Activated CD4-positive, alpha-beta T cell treated with anti-CD3 and anti-CD28 coated beads for 36 hours (primary cell): ENCODE measurements at regions of chr16 and their contacts with region 1.

Region 1: GRCh38 chr16:57413301-57413730 is 8.7 kb downstream of the CCL17 start:
- DNase-seq: no peak
- ATAC-seq: no peak
- H3K4me3 Mint-ChIP-seq: no peak overlapping the region
- H3K27ac Mint-ChIP-seq: no peak overlapping the region
- H3K4me1 Mint-ChIP-seq: peaks cover 10% of the 10 kb centered on the region
- H3K27me3 Mint-ChIP-seq: no peaks in the 10 kb centered on the region

Region 2: GRCh38 chr16:57377080-57377841 is 36.1 kb before region 1 on chr16:
- CTCF ChIA-PET with region 1: interaction called, 5 read pairs
- POLR2A ChIA-PET with region 1: no interaction called
- intact Hi-C with region 1: loop called in 1 of 2 experiments (anchors 2 kb)
- DNase-seq: peak; percentile 70
- ATAC-seq: peak; percentile 90
- H3K4me3 Mint-ChIP-seq: no peak overlapping the region
- H3K27ac Mint-ChIP-seq: no peak overlapping the region
- H3K4me1 Mint-ChIP-seq: peaks cover 16% of the 10 kb centered on the region
- H3K27me3 Mint-ChIP-seq: peaks cover 2% of the 10 kb centered on the region

Region 3: DNA sequence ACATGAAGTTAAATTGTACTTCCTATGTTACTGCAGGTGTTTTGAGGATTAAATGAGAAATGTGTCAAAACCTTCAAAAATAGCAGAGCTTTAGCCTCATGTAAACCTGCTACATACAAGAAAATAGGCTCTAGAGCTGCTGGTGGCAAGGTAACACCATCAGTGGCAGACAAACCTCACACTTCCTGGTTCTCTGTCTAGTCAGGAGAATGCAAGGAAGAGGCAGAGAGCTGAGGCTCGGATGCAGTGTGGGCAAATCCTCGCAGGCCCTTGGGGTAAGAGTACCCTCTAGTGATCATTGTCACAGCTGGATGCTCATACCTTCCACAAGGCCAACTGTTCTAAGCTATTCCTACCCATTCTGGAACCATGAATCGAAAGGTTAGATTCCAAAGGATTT is 19.7 kb after region 1 on chr16:
- CTCF ChIA-PET with region 1: interaction called, 14 read pairs
- POLR2A ChIA-PET with region 1: no interaction called
- intact Hi-C with region 1: no loop called
- DNase-seq: no peak
- ATAC-seq: no peak
- H3K4me3 Mint-ChIP-seq: no peak overlapping the region
- H3K27ac Mint-ChIP-seq: peak overlapping the region; percentile 49
- H3K4me1 Mint-ChIP-seq: peaks cover 28% of the 10 kb centered on the region
- H3K27me3 Mint-ChIP-seq: no peaks in the 10 kb centered on the region

Region 4: DNA sequence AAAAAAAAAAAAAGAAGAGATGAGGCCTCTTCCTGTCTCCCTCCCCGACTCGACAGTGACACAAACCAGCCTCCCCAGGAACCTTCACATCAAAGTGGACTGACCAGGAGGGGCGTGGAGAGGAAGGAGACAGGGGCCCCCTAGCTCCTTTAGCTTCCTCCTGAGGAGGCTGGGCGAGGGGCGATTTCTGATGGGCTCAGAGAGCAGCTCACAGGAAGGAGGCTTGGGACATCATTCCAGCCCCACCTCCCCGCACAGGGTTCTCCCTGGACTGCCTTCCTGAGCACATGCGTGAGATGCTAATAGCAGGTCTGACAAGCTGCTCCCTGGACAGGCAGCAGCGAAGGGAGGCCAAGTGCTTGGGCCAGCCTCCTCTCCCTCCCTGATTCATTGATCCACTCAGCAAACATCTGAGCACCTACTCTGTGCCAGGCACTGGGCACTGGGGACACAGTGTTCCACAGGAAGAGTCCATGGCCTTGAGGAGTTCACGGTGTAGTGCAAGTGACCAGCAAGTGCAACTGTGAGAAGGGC is 87.3 kb after region 1 on chr16:
- CTCF ChIA-PET with region 1: no interaction called
- POLR2A ChIA-PET with region 1: no interaction called
- intact Hi-C with region 1: no loop called
- DNase-seq: no peak
- ATAC-seq: peak; percentile 88
- H3K4me3 Mint-ChIP-seq: no peak overlapping the region
- H3K27ac Mint-ChIP-seq: no peak overlapping the region
- H3K4me1 Mint-ChIP-seq: peaks cover 11% of the 10 kb centered on the region
- H3K27me3 Mint-ChIP-seq: no peaks in the 10 kb centered on the region